ENCODE measurements at regions of chr2 and their contacts with region 1.

Region 1: GRCh38 chr2:108396845-108397244 is 19.1 kb downstream of the SULT1C4 start:
- DNase-seq: peak in 1 of 4 experiments; percentile 58
- ATAC-seq: peak; percentile 61
- H3K4me3 ChIP-seq: no peak overlapping the region
- H3K27ac ChIP-seq: no peak overlapping the region
- H3K4me1 ChIP-seq: peaks cover 0 to 9% of the 10 kb centered on the region in 2 experiments; a peak in 3 of 5 replicates
- H3K27me3 ChIP-seq: no peaks in the 10 kb centered on the region
- CTCF ChIP-seq: peak; percentile 25 to 54 (median 26); a peak in 3 of 6 replicates
- EP300 ChIP-seq: no peak
- POLR2A ChIP-seq: no peak
- RAD21 ChIP-seq: peak in 1 of 2 experiments; percentile 46; a peak in 2 of 4 replicates

Region 2: DNA sequence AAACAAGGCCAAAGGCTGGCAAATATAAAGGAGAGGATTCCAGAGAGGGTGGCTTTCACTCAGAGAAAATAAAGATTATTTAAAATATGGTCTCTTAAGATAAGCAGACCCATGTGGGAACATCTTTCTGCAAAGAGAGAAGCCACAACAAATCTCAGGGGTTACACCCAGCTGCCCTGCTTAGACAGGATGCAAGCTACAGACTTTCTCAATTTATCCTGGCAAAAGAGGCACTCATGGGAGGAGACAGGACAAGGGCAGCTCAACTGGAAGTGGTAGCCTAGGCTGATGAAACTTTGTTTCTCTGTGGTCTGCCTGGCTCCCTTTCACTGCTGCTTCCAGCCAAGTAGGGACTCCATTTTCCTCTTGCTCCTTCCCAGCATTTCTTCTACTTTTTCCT is 45.0 kb before region 1 on chr2:
- CTCF ChIA-PET with region 1: no interaction called
- POLR2A ChIA-PET with region 1: no interaction called
- in situ Hi-C with region 1: no loop called
- intact Hi-C with region 1: loop called (anchors 5 kb)
- DNase-seq: peak in 2 of 4 experiments; percentile 33 to 36
- ATAC-seq: no peak
- H3K4me3 ChIP-seq: no peak overlapping the region
- H3K27ac ChIP-seq: no peak overlapping the region
- H3K4me1 ChIP-seq: peaks cover 3 to 17% of the 10 kb centered on the region in 2 experiments; a peak in 3 of 5 replicates
- H3K27me3 ChIP-seq: no peaks in the 10 kb centered on the region
- CTCF ChIP-seq: no peak
- EP300 ChIP-seq: no peak
- POLR2A ChIP-seq: no peak
- RAD21 ChIP-seq: no peak

Measured in K562 (cell line).